ENCODE measurements at regions of chr7 and their contacts with region 1.

Region 1: GRCh38 chr7:22377703-22378102 is 20.7 kb upstream of the RAPGEF5 start:
- DNase-seq: no peak
- ATAC-seq: peak in 6 of 8 donors; percentile 23 to 81 (median 54)
- H3K4me3 ChIP-seq: no peak overlapping the region
- H3K27ac ChIP-seq: peak overlapping the region in 5 of 10 donors; percentile 5 to 46 (median 20)
- H3K4me1 ChIP-seq: peaks cover 0 to 18% (median 6%) of the 10 kb centered on the region in 9 donors
- H3K27me3 ChIP-seq: no peaks in the 10 kb centered on the region
- CTCF ChIP-seq: no peak

Region 2: DNA sequence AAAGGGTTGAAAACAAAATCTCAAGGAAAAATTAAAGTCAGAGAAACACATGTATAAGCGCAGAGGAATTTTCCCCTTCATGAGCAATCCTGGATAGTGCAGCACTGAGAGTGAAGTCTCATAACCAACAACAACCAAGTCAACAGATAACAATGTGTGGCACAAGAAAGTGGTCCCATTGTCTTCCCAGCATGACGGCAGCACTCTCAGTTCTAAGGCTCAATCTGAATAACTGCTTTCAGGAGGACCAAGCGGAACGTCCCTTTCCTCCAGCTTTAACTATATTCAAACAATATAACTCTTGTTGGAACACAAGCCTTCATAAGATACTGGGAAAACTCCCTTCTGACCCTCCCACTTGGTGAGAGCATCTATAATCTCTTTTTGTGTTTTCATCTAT is 158.7 kb before region 1 on chr7:
- intact Hi-C with region 1: loop called in 1 of 10 experiments (anchors 10 kb)
- DNase-seq: no peak
- ATAC-seq: peak in 7 of 8 donors; percentile 41 to 65 (median 57)
- H3K4me3 ChIP-seq: peak overlapping the region; percentile 12 to 67 (median 47)
- H3K27ac ChIP-seq: peak overlapping the region; percentile 52 to 89 (median 82)
- H3K4me1 ChIP-seq: peaks cover 0 to 56% (median 8%) of the 10 kb centered on the region in 9 donors
- H3K27me3 ChIP-seq: no peaks in the 10 kb centered on the region
- CTCF ChIP-seq: no peak

Region 3: DNA sequence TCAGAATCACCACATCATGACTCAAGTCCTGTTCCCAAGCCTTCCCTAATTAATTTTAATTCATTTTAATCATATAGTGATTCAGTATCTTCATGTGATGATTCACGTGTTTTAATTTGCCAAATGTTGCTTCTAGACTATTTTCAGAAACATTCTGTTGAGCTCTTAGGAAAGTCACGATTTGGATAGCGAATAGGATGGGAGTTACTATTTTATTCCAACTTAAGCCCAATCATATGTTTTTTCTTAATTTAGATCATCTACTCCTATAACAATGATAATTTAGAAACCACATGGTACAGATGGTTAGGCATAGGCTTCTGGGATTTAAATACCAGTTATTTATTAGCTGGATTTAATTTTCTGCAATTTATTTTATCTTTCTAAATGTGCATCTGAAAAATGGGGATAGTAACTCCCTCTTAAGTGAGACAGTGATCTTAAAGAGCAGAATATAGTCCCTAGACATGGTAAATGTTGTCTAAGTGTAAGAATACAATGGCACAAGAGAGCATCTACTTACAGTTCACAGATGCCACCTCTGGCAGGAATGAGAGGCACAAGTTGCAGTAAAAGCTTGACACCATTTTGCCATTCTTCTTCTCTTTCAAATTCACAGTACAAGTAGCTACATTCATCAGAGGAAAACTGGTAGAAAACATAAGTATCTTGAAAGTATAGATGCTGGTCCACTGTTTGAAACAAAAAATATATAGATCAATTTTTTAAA is 69.7 kb before region 1 on chr7:
- intact Hi-C with region 1: no loop called
- DNase-seq: no peak
- ATAC-seq: no peak
- H3K4me3 ChIP-seq: no peak overlapping the region
- H3K27ac ChIP-seq: no peak overlapping the region
- H3K4me1 ChIP-seq: no peaks in the 10 kb centered on the region
- H3K27me3 ChIP-seq: no peaks in the 10 kb centered on the region
- CTCF ChIP-seq: no peak

Region 4: GRCh38 chr7:22393913-22394729 is 16.4 kb after region 1 on chr7:
- intact Hi-C with region 1: loop called in 1 of 10 experiments (anchors 2 kb)
- DNase-seq: no peak
- ATAC-seq: no peak
- H3K4me3 ChIP-seq: no peak overlapping the region
- H3K27ac ChIP-seq: no peak overlapping the region
- H3K4me1 ChIP-seq: peaks cover 0 to 5% (median 0%) of the 10 kb centered on the region in 9 donors
- H3K27me3 ChIP-seq: peaks cover 0 to 7% (median 0%) of the 10 kb centered on the region in 7 donors
- CTCF ChIP-seq: no peak

Region 5: DNA sequence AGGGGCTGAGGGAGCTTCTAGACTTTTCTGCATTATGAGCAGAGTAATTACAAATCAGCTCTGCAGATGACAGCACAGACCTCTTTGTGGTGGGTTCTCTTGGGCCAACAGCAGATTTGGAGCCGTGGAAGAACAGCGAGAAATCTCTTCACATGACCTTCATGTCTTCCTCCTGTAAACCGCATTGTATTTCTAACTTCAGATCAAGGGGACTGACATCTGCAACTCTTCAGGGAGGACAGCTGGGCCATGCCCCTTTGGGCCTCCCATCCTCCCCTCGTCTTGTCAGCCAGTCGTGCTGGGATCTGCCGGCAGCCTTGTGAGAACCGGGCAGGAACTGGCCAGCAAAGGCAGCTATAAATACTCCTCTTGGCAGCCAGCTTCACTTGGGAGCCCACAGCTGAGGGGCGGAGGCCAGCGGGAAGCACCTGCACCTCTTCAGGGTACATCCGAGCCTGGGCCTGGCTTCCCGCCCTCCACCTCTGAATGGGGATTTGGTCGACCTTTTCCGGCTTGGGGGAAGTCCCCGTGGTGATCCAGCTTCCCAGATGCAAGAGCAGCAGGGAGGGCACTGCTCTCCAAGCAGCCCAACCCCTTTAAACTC is 67.5 kb after region 1 on chr7:
- intact Hi-C with region 1: loop called in 1 of 10 experiments (anchors 5 kb)
- DNase-seq: peak; percentile 81 to 86
- ATAC-seq: peak; percentile 91 to 97 (median 96)
- H3K4me3 ChIP-seq: peak overlapping the region in 2 of 10 donors; percentile 3 to 25
- H3K27ac ChIP-seq: peak overlapping the region; percentile 13 to 86 (median 75)
- H3K4me1 ChIP-seq: peaks cover 2 to 44% (median 36%) of the 10 kb centered on the region in 9 donors
- H3K27me3 ChIP-seq: no peaks in the 10 kb centered on the region
- CTCF ChIP-seq: no peak

Measured in heart right ventricle (tissue), 16 donors.